ENCODE measurements at regions of chr7 and their contacts with region 1.

Region 1: GRCh38 chr7:124152859-124153692 is 120.2 kb upstream of the TMEM229A start:
- DNase-seq: peak; percentile 66
- ATAC-seq: peak; percentile 95
- H3K4me3 ChIP-seq: no peak overlapping the region
- H3K27ac ChIP-seq: no peak overlapping the region
- H3K4me1 ChIP-seq: no peaks in the 10 kb centered on the region
- H3K27me3 ChIP-seq: no peaks in the 10 kb centered on the region
- CTCF ChIP-seq: peak; percentile 38
- POLR2A ChIP-seq: no peak
- RAD21 ChIP-seq: no peak

Region 2: GRCh38 chr7:124020060-124020459 is 133.0 kb before region 1 on chr7:
- CTCF ChIA-PET with region 1: no interaction called
- POLR2A ChIA-PET with region 1: interaction called, 11 read pairs
- dilution Hi-C with region 1: no loop called
- in situ Hi-C with region 1: no loop called
- intact Hi-C with region 1: no loop called
- DNase-seq: no peak
- ATAC-seq: no peak
- H3K4me3 ChIP-seq: no peak overlapping the region
- H3K27ac ChIP-seq: no peak overlapping the region
- H3K4me1 ChIP-seq: no peaks in the 10 kb centered on the region
- H3K27me3 ChIP-seq: no peaks in the 10 kb centered on the region
- CTCF ChIP-seq: no peak
- POLR2A ChIP-seq: no peak
- RAD21 ChIP-seq: no peak

Region 3: GRCh38 chr7:124784879-124785818 is 632.1 kb after region 1 on chr7:
- CTCF ChIA-PET with region 1: interaction called, 9 read pairs
- POLR2A ChIA-PET with region 1: no interaction called
- dilution Hi-C with region 1: no loop called
- in situ Hi-C with region 1: loop called (anchors 5 kb)
- intact Hi-C with region 1: loop called (anchors 1 kb)
- DNase-seq: peak; percentile 73
- ATAC-seq: peak; percentile 85
- H3K4me3 ChIP-seq: no peak overlapping the region
- H3K27ac ChIP-seq: no peak overlapping the region
- H3K4me1 ChIP-seq: peaks cover 2% of the 10 kb centered on the region; the same call in 1 of the 2 replicates
- H3K27me3 ChIP-seq: no peaks in the 10 kb centered on the region
- CTCF ChIP-seq: peak; percentile 95
- POLR2A ChIP-seq: 0 out of 2 replicates have a peak, but pooled peaks have one; percentile 43
- RAD21 ChIP-seq: peak; percentile 97

Region 4: DNA sequence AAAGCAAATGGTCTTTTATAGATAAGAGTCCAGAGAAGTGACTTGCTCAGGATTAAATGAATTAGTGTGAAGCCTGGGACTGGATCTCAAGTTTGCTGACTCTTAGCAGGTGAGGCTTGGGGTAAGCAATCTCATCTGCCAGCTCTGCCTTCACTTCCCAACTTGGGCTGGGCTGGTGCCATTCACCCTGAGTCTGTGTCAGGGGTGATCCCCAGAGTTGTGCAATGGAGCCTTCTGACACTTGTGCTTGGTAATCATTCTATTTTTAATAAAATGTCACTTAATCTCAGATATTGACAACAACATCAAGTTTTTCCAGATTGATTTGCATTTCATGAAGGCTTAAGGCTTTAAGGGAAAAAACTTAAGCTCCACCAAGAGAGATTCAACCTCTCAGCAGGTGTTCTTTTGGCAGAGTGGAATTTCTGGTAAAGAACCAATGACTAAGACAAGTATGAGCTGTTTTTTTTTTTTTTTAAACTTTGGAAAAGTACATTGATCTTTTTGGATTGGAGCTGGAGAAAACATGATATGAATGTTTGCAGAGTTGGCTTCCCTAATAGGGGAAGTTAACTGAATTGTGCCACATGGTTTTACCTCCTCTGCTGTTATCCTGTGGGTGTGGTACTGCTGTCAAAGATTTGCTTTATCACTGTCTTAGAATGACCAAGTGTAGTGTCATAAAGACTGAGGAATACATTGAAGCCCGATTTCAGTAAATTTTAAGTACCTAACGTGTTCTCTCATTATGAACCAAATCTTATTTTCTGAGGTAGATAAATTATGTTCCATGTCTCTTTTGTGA is 661.1 kb after region 1 on chr7:
- CTCF ChIA-PET with region 1: interaction called, 3 read pairs
- POLR2A ChIA-PET with region 1: no interaction called
- dilution Hi-C with region 1: loop called (anchors 25 kb)
- in situ Hi-C with region 1: no loop called
- intact Hi-C with region 1: no loop called
- DNase-seq: no peak
- ATAC-seq: no peak
- H3K4me3 ChIP-seq: no peak overlapping the region
- H3K27ac ChIP-seq: no peak overlapping the region
- H3K4me1 ChIP-seq: no peaks in the 10 kb centered on the region
- H3K27me3 ChIP-seq: no peaks in the 10 kb centered on the region
- CTCF ChIP-seq: no peak
- POLR2A ChIP-seq: no peak
- RAD21 ChIP-seq: no peak

Region 5: DNA sequence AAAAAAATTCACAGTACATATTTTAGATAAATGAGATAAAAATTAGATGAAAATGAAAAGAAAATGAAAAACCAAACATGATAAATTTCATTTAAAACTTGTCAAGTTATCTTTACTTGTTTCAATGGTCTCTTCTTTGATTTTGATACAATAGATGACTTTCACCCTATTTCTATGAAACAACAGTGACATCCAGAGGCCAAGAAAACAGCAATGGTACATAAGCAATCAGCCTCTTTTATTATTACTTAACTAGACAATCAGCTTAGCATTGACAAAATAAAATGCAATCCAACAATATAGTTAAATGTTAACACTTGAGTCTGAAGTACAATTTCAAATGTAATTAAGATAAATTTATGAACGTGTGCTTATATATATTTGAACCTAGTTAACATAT is 687.4 kb after region 1 on chr7:
- CTCF ChIA-PET with region 1: no interaction called
- POLR2A ChIA-PET with region 1: no interaction called
- dilution Hi-C with region 1: no loop called
- in situ Hi-C with region 1: no loop called
- intact Hi-C with region 1: loop called (anchors 5 kb)
- DNase-seq: no peak
- ATAC-seq: no peak
- H3K4me3 ChIP-seq: no peak overlapping the region
- H3K27ac ChIP-seq: no peak overlapping the region
- H3K4me1 ChIP-seq: no peaks in the 10 kb centered on the region
- H3K27me3 ChIP-seq: no peaks in the 10 kb centered on the region
- CTCF ChIP-seq: peak; percentile 32
- POLR2A ChIP-seq: no peak
- RAD21 ChIP-seq: peak; percentile 26; the same call in 1 of the 2 replicates